ENCODE measurements at regions of chr14 and their contacts with region 1.

Region 1: GRCh38 chr14:67816326-67817002 is at the start of gene ZFYVE26:
- DNase-seq: peak; percentile 97
- H3K4me3 Mint-ChIP-seq: peak within 1 kb of the TSS; percentile 89
- H3K27ac Mint-ChIP-seq: peak within 1 kb of the TSS; percentile 93
- H3K4me1 Mint-ChIP-seq: peaks cover 36% of the 10 kb centered on the region
- H3K27me3 Mint-ChIP-seq: no peaks in the 10 kb centered on the region
- total RNA-seq, gene ZFYVE26: 13.5 and 15.8 TPM in 2 replicates

Region 2: GRCh38 chr14:67619446-67620216 is 196.8 kb before region 1 on chr14 and contains the start of gene ARG2:
- intact Hi-C with region 1: loop called (anchors 5 kb)
- DNase-seq: peak; percentile 99
- H3K4me3 Mint-ChIP-seq: peak within 1 kb of the TSS; percentile 92
- H3K27ac Mint-ChIP-seq: peak within 1 kb of the TSS; percentile 85
- H3K4me1 Mint-ChIP-seq: peaks cover 33% of the 10 kb centered on the region
- H3K27me3 Mint-ChIP-seq: peaks cover 15% of the 10 kb centered on the region
- total RNA-seq, gene ARG2: 4.7 and 5.0 TPM in 2 replicates

Region 3: DNA sequence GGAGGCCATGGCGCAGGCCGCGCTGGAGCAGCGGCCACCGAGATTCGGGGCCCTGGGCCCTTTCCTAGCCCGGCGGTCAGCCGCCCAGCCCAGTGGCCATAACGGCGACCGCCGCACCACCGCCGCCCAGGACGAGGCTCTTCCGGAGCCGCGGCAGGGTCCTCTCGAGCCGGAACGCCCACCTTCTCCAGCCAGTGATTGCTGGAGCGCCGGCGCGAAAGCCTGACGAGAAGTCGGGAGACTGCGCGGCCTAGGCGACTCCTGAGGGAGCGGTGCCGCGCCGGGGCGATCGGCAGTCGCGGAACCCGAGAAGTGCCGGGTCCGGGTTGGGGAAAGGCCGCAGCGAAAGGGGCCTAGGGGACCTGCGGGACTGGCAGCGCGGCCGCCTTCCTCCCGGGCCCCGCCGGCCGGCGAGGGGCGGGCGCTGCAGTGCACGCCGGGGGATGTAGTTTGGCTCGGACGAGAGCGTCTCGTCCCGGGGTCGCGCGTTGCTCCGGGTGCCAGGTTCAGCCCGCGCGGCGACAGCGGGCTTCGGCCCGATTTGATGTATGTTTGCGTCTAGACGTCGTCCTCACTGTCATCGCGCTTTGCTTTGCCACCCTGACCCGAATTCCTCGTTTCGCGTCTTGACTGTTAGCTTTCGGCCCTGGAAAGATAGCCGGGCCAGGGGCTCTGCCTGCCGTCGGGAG is 141.8 kb before region 1 on chr14 and contains the start of gene VTI1B:
- intact Hi-C with region 1: loop called (anchors 1 kb)
- DNase-seq: peak; percentile 93
- H3K4me3 Mint-ChIP-seq: peak within 1 kb of the TSS; percentile 90
- H3K27ac Mint-ChIP-seq: peak within 1 kb of the TSS; percentile 90
- H3K4me1 Mint-ChIP-seq: peaks cover 35% of the 10 kb centered on the region
- H3K27me3 Mint-ChIP-seq: no peaks in the 10 kb centered on the region
- total RNA-seq, gene VTI1B: 75.3 and 78.5 TPM in 2 replicates

Region 4: DNA sequence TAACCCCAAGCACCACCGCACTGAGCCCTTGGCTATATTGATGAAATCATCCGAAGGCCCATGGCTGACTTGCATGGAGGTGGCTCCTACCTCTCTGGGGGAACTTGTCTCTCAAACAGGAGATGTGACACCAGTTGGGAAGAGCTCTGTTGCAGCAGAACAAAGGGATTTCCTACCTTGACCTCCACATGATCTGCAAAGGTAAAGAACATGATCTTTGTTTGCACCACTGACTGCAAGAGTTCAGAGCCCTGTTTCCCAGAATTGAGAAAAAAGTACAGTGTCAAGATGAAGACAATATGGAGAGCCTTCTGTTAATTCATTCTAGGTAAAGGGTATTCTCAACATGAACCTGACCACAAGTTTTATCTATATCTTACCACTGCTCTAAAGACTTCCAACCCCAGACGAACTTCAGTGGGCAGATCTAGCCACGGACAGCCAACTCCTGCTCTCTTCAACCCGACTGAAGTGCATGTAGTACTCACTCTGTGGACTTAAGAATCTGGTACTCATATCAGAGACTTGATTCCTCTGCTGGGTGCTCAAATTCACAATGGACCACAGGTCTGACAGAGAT is 32.1 kb before region 1 on chr14:
- intact Hi-C with region 1: no loop called
- DNase-seq: no peak
- H3K4me3 Mint-ChIP-seq: no peak overlapping the region
- H3K27ac Mint-ChIP-seq: no peak overlapping the region
- H3K4me1 Mint-ChIP-seq: no peaks in the 10 kb centered on the region
- H3K27me3 Mint-ChIP-seq: no peaks in the 10 kb centered on the region

Region 5: GRCh38 chr14:67806246-67806645 is 10.2 kb before region 1 on chr14:
- intact Hi-C with region 1: no loop called
- DNase-seq: no peak
- H3K4me3 Mint-ChIP-seq: no peak overlapping the region
- H3K27ac Mint-ChIP-seq: no peak overlapping the region
- H3K4me1 Mint-ChIP-seq: peaks cover 4% of the 10 kb centered on the region
- H3K27me3 Mint-ChIP-seq: no peaks in the 10 kb centered on the region

Region 6: GRCh38 chr14:68816262-68816942 is 999.9 kb after region 1 on chr14:
- intact Hi-C with region 1: loop called (anchors 10 kb)
- DNase-seq: peak; percentile 97
- H3K4me3 Mint-ChIP-seq: peak overlapping the region; percentile 79
- H3K27ac Mint-ChIP-seq: peak overlapping the region; percentile 90
- H3K4me1 Mint-ChIP-seq: peaks cover 56% of the 10 kb centered on the region
- H3K27me3 Mint-ChIP-seq: no peaks in the 10 kb centered on the region

Measured in activated CD4-positive, alpha-beta T cell treated with anti-CD3 and anti-CD28 coated beads, Interleukin-2, amount 10 ng/mL, durations not matched to agents 24 days and 14 days (primary cell).